Activated CD8-positive, alpha-beta T cell treated with anti-CD3 and anti-CD28 coated beads for 36 hours (primary cell): ENCODE measurements at regions of chr1 and their contacts with region 1.

Region 1: GRCh38 chr1:174262349-174263241 is 103.3 kb downstream of the RABGAP1L start:
- DNase-seq: peak; percentile 8
- ATAC-seq: peak; percentile 60
- H3K4me3 Mint-ChIP-seq: no peak overlapping the region
- H3K27ac Mint-ChIP-seq: no peak overlapping the region
- H3K4me1 Mint-ChIP-seq: no peaks in the 10 kb centered on the region
- H3K27me3 Mint-ChIP-seq: no peaks in the 10 kb centered on the region
- CTCF ChIP-seq: peak; percentile 53

Region 2: DNA sequence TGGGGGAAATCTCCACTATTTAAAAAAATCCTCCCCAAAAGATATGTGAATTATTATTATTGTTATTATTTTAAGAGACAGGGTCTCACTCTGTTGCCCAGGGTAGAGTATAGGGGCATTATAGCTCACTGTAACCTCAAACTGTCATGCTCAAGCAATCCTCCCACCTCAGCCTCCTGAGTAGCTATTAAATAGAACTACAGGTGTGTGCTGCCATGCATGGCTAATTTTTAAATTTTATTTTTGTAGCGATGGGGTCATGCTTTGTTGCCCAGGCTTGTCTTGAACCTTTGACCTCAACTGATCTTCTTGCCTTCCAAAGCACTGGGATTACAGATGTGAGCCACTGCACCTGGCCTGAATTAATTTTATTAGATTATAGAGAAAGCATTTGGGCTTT is 13.5 kb after region 1 on chr1:
- CTCF ChIA-PET with region 1: interaction called, 19 read pairs
- POLR2A ChIA-PET with region 1: no interaction called
- intact Hi-C with region 1: no loop called
- DNase-seq: no peak
- ATAC-seq: no peak
- H3K4me3 Mint-ChIP-seq: no peak overlapping the region
- H3K27ac Mint-ChIP-seq: no peak overlapping the region
- H3K4me1 Mint-ChIP-seq: no peaks in the 10 kb centered on the region
- H3K27me3 Mint-ChIP-seq: no peaks in the 10 kb centered on the region
- CTCF ChIP-seq: no peak

Region 3: GRCh38 chr1:174726167-174726879 is 463.7 kb after region 1 on chr1:
- CTCF ChIA-PET with region 1: interaction called, 18 read pairs
- POLR2A ChIA-PET with region 1: no interaction called
- intact Hi-C with region 1: loop called (anchors 5 kb)
- DNase-seq: no peak
- ATAC-seq: no peak
- H3K4me3 Mint-ChIP-seq: no peak overlapping the region
- H3K27ac Mint-ChIP-seq: no peak overlapping the region
- H3K4me1 Mint-ChIP-seq: no peaks in the 10 kb centered on the region
- H3K27me3 Mint-ChIP-seq: no peaks in the 10 kb centered on the region
- CTCF ChIP-seq: peak; percentile 53

Region 4: GRCh38 chr1:174743654-174744561 is 481.3 kb after region 1 on chr1:
- CTCF ChIA-PET with region 1: interaction called, 71 read pairs
- POLR2A ChIA-PET with region 1: no interaction called
- intact Hi-C with region 1: loop called (anchors 5 kb)
- DNase-seq: no peak
- ATAC-seq: no peak
- H3K4me3 Mint-ChIP-seq: no peak overlapping the region
- H3K27ac Mint-ChIP-seq: no peak overlapping the region
- H3K4me1 Mint-ChIP-seq: peaks cover 5% of the 10 kb centered on the region
- H3K27me3 Mint-ChIP-seq: no peaks in the 10 kb centered on the region
- CTCF ChIP-seq: peak; percentile 71

Region 5: DNA sequence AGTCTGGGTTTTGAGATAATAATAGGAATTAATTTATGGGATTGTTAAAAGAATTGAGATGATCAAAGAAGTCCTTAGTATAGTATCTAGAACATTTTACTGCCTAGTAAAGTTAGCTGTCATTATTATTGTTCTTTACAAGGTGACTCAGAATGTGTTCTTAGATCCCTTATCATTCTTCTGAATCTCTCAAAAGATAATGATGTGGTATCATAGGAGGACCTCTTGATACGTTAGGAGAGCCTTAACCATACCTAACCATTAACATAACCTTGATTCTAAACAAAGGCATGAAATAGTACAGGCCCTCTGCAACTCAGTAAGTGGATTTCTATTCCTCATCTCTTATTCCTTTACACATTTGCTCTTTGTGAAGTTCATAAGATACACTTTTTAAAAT is 490.5 kb after region 1 on chr1:
- CTCF ChIA-PET with region 1: interaction called, 71 read pairs
- POLR2A ChIA-PET with region 1: no interaction called
- intact Hi-C with region 1: no loop called
- DNase-seq: no peak
- ATAC-seq: no peak
- H3K4me3 Mint-ChIP-seq: no peak overlapping the region
- H3K27ac Mint-ChIP-seq: no peak overlapping the region
- H3K4me1 Mint-ChIP-seq: no peaks in the 10 kb centered on the region
- H3K27me3 Mint-ChIP-seq: no peaks in the 10 kb centered on the region
- CTCF ChIP-seq: no peak